ENCODE measurements at regions of chr12 and their contacts with region 1.

Region 1: GRCh38 chr12:116599285-116600136 is 40.3 kb downstream of the MAP1LC3B2 start:
- DNase-seq: peak; percentile 86 to 91
- ATAC-seq: peak; percentile 87 to 96 (median 93)
- H3K4me3 ChIP-seq: peak overlapping the region; percentile 67
- H3K27ac ChIP-seq: peak overlapping the region; percentile 83
- H3K4me1 ChIP-seq: peaks cover 16% of the 10 kb centered on the region
- H3K27me3 ChIP-seq: no peaks in the 10 kb centered on the region
- CTCF ChIP-seq: peak; percentile 64

Region 2: DNA sequence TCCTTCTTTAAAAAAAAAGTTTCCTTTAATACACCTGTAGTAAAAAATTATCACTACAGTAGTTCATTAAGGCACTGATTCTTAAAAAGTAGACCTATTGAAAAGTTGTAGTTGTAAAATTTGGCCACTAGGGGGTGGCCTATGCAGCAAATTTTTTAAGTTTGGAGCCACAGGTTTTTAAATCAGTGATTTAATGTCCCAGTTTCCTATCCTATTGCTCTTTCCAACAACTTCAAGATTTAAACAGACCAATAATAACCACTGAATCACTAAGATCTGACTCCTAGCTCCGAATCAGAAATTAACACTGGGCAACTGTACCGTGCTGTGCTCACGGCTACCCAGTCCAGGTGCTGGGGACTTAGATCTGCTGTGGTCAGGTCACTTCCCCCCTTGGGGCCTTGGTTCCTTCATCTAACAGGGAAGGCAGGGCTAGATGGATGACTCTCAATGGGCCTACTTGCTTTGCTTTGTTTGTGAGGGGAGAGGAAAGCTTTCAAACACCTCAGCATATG is 601.3 kb before region 1 on chr12:
- intact Hi-C with region 1: loop called (anchors 2 to 5 kb)
- DNase-seq: no peak
- ATAC-seq: peak; percentile 55 to 74 (median 60)
- H3K4me3 ChIP-seq: no peak overlapping the region
- H3K27ac ChIP-seq: peak overlapping the region; percentile 5
- H3K4me1 ChIP-seq: peaks cover 30% of the 10 kb centered on the region
- H3K27me3 ChIP-seq: no peaks in the 10 kb centered on the region
- CTCF ChIP-seq: peak; percentile 85

Region 3: DNA sequence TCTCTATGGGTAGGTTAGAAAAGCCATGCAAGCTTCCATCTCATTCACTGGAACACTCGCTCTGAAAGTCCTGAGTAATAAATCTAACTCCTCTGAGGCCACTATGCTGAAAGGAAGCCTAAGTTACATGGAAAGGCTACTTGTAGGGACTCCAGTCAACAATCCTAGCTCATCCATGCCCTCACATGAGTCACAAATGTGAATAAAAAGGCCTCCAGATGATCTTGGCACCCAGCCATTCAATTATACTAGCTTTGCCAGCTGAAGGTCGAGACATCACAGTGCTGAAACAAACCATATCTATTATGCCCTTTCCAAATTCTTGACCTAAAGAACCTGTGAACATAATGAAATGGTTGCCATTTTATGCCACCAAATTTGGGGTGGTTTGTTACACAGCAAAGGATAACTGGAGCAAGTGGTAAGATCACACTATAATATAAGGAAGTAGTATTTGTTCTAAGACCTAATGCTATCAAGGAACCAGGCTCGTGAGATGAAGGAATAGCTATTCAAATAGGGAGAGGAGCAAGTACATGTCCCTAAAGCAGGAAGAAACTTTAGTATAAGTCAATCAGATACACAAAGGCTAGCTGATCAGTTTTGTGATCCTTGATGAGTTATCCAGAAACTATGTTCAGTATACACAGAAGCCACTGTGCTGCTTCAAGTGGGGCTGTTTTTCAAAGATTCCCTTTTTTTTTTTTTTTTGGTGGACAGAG is 464.1 kb before region 1 on chr12:
- intact Hi-C with region 1: loop called in 1 of 2 experiments (anchors 10 kb)
- DNase-seq: no peak
- ATAC-seq: peak; percentile 43 to 52 (median 46)
- H3K4me3 ChIP-seq: no peak overlapping the region
- H3K27ac ChIP-seq: peak overlapping the region; percentile 17
- H3K4me1 ChIP-seq: peaks cover 62% of the 10 kb centered on the region
- H3K27me3 ChIP-seq: no peaks in the 10 kb centered on the region
- CTCF ChIP-seq: no peak

Region 4: DNA sequence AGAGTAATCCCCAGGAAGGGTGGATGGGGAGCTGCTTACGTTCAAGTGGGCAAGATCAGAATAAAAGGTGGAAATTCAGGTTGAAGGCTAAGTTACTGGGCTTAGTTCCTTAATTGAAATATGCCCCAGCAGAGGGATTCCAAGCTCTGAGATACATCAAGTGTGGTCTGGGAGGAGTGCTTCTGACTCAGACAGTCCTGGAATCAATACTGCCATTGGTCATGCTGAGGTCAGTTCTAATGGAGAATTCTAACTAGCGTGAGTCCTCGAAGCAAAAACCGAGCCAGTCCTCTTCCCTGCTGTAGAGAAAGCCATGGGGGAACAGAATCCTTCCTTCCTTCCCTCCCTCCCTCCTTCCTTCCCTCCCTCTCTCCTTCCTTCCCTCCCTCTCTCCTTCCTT is 722.1 kb after region 1 on chr12:
- intact Hi-C with region 1: no loop called
- DNase-seq: no peak
- ATAC-seq: no peak
- H3K4me3 ChIP-seq: no peak overlapping the region
- H3K27ac ChIP-seq: no peak overlapping the region
- H3K4me1 ChIP-seq: no peaks in the 10 kb centered on the region
- H3K27me3 ChIP-seq: no peaks in the 10 kb centered on the region
- CTCF ChIP-seq: no peak

Measured in psoas muscle (tissue), 8 donors.